ENCODE measurements at regions of chr20 and their contacts with region 1.

Region 1: GRCh38 chr20:58839474-58839874 is 11.2 kb downstream of the GNAS-AS1 start:
- DNase-seq: peak in 1 of 2 experiments; percentile 71
- H3K4me3 ChIP-seq: peak overlapping the region; percentile 49 to 62 (median 60)
- H3K27ac ChIP-seq: no peak overlapping the region
- H3K4me1 ChIP-seq: peaks cover 9 to 21% (median 15%) of the 10 kb centered on the region in 4 experiments
- H3K27me3 ChIP-seq: peaks cover 0 to 18% (median 11%) of the 10 kb centered on the region in 4 experiments; a peak in 5 of 7 replicates
- CTCF ChIP-seq: peak; percentile 64 to 71 (median 67)
- EP300 ChIP-seq: no peak
- POLR2A ChIP-seq: peak in 1 of 2 experiments; percentile 27; a peak in 1 of 3 replicates
- RAD21 ChIP-seq: peak; percentile 71 to 85

Region 2: DNA sequence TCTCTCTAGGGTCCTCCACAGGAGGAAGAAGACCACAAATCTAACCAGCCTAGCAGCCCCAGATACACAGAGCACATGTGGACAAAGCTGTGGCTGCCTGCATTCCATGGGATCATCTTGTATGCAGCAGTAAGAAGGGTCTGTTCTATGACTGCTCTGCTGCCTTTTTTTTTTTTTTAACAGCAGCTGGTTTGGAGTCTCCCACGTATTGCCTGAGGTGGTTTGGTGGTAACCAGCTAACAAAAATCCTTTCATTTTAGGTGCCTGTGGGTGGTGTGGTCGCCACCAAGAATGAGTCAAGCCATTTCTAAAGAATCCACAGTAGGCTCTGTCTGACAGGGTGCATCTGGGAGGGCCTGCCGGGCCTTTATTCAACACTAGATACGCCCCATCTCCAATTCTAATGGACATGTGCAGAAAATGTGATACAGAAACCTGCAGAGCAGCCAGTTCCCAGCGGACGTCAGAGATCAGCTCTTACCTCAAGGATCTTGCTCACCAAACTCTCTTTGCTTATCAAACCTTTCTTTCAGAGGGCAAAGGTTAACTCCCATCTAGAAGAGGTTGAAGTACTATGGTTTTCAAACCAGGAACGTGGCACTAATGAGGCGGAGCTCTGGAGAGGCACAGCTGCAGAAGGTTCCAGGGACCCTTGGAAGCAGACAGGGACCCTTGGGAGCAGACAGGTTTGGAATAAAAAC is 20.7 kb before region 1 on chr20:
- CTCF ChIA-PET with region 1: interaction called, 18 read pairs
- POLR2A ChIA-PET with region 1: interaction called, 119 read pairs
- DNase-seq: no peak
- H3K4me3 ChIP-seq: no peak overlapping the region
- H3K27ac ChIP-seq: no peak overlapping the region
- H3K4me1 ChIP-seq: 0 out of 7 replicates have a peak, but pooled peaks cover 0 to 2% (median 0%) of the 10 kb centered on the region in 4 experiments
- H3K27me3 ChIP-seq: no peaks in the 10 kb centered on the region
- CTCF ChIP-seq: no peak
- EP300 ChIP-seq: no peak
- POLR2A ChIP-seq: no peak
- RAD21 ChIP-seq: no peak

Region 3: DNA sequence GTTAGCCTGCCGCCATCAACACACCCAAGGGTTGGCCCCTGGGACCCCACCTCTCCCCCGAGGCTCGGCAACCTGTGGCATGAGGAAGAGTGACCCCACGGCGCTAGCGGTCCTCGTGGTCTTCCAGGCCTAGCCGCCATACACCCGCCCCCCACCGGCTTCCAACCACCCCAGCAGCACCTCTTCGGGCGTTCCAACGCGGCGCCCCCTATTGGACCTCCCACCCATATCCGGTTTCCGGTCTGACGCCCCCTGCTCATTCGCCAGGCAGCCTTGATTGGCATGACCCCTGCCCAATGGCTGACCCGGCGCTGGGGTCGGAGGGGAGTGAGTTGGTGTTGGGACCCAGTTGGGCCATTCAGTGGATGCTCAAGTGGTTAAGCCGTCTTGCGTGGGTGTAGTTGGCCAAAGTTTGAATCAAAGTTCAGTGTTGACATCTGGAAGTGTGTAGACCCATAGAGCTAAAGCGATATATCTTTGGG is 11.3 kb after region 1 on chr20 and contains the start of gene GNAS-AS1:
- CTCF ChIA-PET with region 1: interaction called, 57 read pairs
- POLR2A ChIA-PET with region 1: interaction called, 163 read pairs
- DNase-seq: peak; percentile 76 to 96
- H3K4me3 ChIP-seq: peak within 1 kb of the TSS; percentile 68 to 88 (median 78)
- H3K27ac ChIP-seq: peak within 1 kb of the TSS; percentile 87
- H3K4me1 ChIP-seq: peaks cover 0 to 32% (median 15%) of the 10 kb centered on the region in 4 experiments; a peak in 6 of 7 replicates
- H3K27me3 ChIP-seq: peaks cover 16 to 47% (median 41%) of the 10 kb centered on the region in 4 experiments
- CTCF ChIP-seq: peak in 2 of 3 experiments; percentile 9 to 11; a peak in 2 of 4 replicates
- EP300 ChIP-seq: no peak
- POLR2A ChIP-seq: no peak; a peak in 1 of 3 replicates
- RAD21 ChIP-seq: no peak
- total RNA-seq, gene GNAS-AS1: 11.7 and 13.7 TPM in 2 replicates

Measured in H1 (cell line).